HEK293T (cell line): ENCODE measurements at regions of chr1 and their contacts with region 1.

Region 1: DNA sequence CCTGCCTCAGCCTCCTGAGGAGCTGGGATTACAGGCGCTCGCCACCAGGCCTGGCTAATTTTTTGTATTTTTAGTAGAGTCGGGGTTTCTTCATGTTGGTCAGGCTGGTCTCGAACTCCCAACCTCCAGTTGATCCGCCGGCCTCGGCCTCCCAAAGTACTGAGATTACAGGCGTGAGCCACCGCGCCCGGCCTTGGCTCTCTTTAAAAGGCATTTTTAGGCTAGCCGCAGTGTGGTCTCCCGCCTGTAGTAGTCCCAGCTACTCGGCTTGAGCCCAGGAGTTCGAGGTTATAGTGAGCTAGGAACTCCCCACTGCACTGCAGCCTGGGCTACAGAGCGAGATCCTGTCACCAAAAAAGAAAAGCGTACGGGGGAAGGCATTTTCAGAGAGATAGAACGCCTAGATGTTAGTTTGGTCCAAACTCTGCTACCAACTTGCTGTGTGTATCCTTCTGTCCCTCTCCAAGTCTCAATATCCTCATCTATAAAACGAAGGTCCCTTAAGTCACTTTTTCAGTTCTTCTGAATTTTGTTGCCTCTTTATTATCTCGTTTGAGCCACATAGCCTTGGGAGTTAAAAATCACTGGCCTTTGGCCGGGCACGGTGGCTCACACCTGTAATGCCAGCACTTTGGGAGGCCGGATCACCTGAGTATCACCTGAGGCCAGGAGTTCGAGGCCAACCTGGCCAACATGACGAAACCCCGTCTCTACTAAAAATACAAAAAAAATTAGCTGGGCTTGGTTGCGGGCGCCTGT is 734 bp downstream of the MED18 start:
- DNase-seq: no peak

Region 2: GRCh38 chr1:28248283-28249012 is 81.1 kb before region 1 on chr1:
- CTCF ChIA-PET with region 1: interaction called, 4 read pairs
- POLR2A ChIA-PET with region 1: interaction called, 31 read pairs
- DNase-seq: peak; percentile 82

Region 3: GRCh38 chr1:28266920-28267322 is 62.7 kb before region 1 on chr1:
- CTCF ChIA-PET with region 1: no interaction called
- POLR2A ChIA-PET with region 1: interaction called, 13 read pairs
- DNase-seq: peak; percentile 45

Region 4: DNA sequence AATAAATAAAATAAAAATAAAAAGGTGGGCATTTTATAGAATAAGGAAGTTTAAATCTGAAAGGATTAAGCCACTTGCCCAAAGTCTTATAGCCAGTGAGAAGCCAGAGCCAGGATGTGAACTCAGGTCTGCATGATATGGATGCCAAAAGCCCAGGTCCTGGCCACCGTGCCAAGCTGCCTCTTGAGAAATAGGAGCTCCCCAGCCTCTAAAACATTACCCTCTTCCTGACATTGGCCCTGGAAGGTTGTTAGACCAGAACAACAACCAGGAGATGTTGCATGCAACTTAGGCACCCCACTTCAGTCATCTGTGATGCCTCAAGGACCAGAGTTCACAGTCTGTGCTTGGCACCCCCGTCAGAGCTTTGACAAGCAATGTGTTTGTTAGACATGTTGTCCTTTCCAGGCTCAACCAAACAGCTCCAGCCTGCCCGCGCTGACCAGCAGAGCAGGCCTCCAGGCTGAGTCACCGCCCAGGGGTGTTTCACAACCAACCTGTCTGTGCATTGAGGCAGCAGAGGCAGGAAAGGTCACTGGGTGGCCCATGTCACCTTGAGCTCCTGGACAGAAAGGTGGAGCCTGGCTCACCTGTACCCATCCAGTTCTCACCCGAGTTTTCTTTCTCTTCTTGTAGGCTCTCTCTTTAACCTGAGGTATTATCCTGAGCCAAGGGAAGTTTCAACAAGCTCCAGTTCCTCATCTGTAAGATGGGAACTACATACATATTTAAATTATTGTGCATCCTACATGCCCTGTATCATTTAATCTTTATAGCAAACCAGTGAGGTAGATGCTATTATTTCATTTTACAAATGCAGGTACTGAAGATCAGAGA is 15.6 kb before region 1 on chr1:
- CTCF ChIA-PET with region 1: interaction called, 3 read pairs
- POLR2A ChIA-PET with region 1: interaction called, 39 read pairs
- DNase-seq: no peak

Region 5: DNA sequence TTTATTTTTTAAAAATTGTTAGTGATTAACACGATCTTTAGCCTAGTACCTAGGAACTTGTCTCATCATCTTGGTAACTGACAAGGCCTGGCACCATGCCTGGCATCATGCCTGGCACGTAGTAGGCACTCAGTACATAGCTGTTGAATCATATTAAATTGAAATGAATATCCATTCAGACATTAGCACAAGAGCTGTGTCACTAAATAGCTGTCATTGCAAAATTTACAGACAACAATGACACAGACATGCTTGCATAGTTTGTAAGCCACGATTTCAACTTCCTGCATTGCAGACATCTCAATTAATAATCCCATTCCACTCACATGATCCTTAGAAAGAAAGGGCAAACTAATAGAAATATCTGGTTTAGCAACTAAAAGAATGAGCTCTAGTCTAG is 24.5 kb after region 1 on chr1:
- CTCF ChIA-PET with region 1: interaction called, 4 read pairs
- POLR2A ChIA-PET with region 1: interaction called, 19 read pairs
- DNase-seq: no peak

Region 6: GRCh38 chr1:28518000-28518744 is 188.6 kb after region 1 on chr1:
- CTCF ChIA-PET with region 1: no interaction called
- POLR2A ChIA-PET with region 1: no interaction called
- DNase-seq: peak; percentile 96